Naive thymus-derived CD4-positive, alpha-beta T cell (primary cell): ENCODE measurements at regions of chr19 and their contacts with region 1.

Region 1: GRCh38 chr19:56538254-56538760 is 441 bp upstream of the ZFP28 start:
- DNase-seq: peak; percentile 84 to 94 (median 89)
- ATAC-seq: peak; percentile 94
- H3K4me3 ChIP-seq: peak overlapping the region; percentile 87
- H3K4me3 Mint-ChIP-seq: peak overlapping the region; percentile 88 to 95 (median 93)
- H3K27ac ChIP-seq: peak overlapping the region; percentile 83
- H3K27ac Mint-ChIP-seq: peak overlapping the region; percentile 90 to 97 (median 94)
- H3K4me1 ChIP-seq: peaks cover 5% of the 10 kb centered on the region in 2 donors
- H3K4me1 Mint-ChIP-seq: peaks cover 13 to 27% (median 21%) of the 10 kb centered on the region in 7 donors
- H3K27me3 ChIP-seq: no peaks in the 10 kb centered on the region
- H3K27me3 Mint-ChIP-seq: peaks cover 0 to 4% (median 0%) of the 10 kb centered on the region in 5 donors

Region 2: DNA sequence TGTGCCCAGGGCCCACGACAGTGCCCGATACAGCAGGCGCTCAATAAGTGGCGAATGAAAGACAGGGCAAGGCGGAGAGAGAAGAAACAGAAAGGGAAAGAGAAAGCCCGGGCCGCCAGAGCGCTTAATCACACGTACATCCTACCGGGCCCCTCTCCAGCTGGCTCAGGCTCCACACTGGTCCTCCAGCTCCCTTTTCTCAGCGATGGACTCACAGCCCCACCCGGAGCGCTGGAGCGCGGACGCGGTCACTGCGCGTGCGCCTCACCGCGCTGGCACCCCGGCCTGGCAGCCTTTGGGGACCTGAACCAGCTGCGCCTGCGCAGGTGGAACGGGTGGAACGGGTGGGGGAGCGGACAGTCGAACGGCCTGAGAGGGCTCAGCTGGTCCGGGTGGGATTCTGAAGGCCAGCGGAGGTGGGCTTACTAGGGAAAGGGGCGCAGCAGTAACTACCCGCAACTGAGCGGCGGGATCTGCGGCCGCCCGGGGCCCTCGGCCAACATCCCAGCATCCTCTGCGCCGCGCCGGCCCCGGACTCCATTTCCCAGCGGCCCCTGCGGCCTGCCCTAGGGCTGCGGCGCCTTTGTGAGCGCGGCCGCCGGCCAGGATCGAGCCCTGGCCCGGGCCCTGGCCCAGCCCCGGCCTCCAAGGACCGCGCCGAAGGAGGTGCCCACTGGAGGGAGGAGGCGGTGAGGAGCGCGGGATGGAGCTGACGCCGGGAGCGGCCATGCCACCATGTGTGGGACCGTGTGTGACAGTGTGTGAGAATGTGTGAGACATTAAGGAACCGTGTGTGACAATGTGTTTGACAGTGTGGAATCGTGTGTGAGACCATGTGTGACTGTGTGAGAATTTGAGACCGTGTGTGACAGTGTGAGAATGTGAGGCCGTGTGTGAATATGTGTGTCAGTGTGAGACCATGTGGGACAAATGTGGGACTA is 134.3 kb before region 1 on chr19 and contains the start of gene ZNF583:
- CTCF ChIA-PET with region 1: no interaction called
- POLR2A ChIA-PET with region 1: no interaction called
- intact Hi-C with region 1: loop called (anchors 1 kb)
- DNase-seq: peak; percentile 82 to 93 (median 90)
- ATAC-seq: peak; percentile 93
- H3K4me3 ChIP-seq: peak within 1 kb of the TSS; percentile 86
- H3K4me3 Mint-ChIP-seq: peak within 1 kb of the TSS; percentile 87 to 98 (median 94)
- H3K27ac ChIP-seq: peak within 1 kb of the TSS; percentile 96
- H3K27ac Mint-ChIP-seq: peak within 1 kb of the TSS; percentile 80 to 98 (median 95)
- H3K4me1 ChIP-seq: peaks cover 8 to 16% of the 10 kb centered on the region in 2 donors
- H3K4me1 Mint-ChIP-seq: peaks cover 19 to 37% (median 30%) of the 10 kb centered on the region in 7 donors
- H3K27me3 ChIP-seq: no peaks in the 10 kb centered on the region
- H3K27me3 Mint-ChIP-seq: no peaks in the 10 kb centered on the region
- total RNA-seq, gene ZNF583: 2.4 to 14.3 (median 3.1) TPM

Region 3: DNA sequence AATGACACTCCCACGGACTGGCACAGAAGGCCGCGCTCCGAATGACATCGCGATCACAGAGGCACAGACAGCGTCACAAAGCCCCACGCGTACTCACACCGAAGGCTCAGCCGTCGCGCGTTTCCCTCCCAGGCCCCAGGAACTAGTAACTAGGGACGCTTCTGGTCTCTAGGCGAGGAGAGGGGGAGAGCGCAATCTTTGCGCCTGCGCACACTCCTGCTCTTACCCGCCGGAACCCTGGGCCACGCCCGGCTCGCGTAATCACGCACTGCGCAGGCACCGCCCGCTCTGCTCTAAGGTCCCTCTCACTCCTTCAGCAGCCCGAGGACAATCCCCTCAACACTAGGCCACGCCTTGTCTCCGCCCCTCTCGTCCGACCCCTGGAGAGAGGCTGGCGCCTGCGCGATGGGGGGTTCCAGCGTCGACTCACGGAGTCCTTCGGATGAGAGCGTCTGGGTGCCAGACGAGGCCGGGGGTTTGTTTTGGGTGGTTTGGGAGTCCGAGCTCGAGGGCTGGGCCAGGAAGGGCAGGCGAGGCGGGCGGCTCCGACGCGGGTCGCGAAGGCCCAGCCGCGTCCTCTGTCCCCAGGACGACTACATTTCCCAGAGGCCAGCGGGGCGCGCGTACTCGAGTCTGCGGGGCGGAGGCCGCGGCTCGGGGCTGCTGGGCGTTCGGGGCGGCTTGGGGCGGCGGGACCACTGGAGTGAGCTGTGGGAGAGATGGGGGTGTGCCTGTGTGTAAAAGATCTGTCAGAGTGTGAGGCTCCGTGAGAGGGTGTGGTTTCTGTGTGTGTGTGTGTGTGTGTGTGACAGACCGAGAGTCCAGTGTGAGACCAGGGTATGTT is 30.6 kb before region 1 on chr19 and contains the start of gene ZNF471:
- CTCF ChIA-PET with region 1: no interaction called
- POLR2A ChIA-PET with region 1: no interaction called
- intact Hi-C with region 1: loop called in 1 of 2 experiments (anchors 1 kb)
- DNase-seq: peak; percentile 44 to 93 (median 82)
- ATAC-seq: peak; percentile 99
- H3K4me3 ChIP-seq: peak within 1 kb of the TSS; percentile 42
- H3K4me3 Mint-ChIP-seq: no peak within 1 kb of the TSS
- H3K27ac ChIP-seq: peak within 1 kb of the TSS; percentile 85
- H3K27ac Mint-ChIP-seq: peak within 1 kb of the TSS in 3 of 9 donors; percentile 3 to 81 (median 10)
- H3K4me1 ChIP-seq: peaks cover 0 to 5% of the 10 kb centered on the region in 2 donors
- H3K4me1 Mint-ChIP-seq: peaks cover 0 to 10% (median 6%) of the 10 kb centered on the region in 7 donors
- H3K27me3 ChIP-seq: no peaks in the 10 kb centered on the region
- H3K27me3 Mint-ChIP-seq: peaks cover 0 to 15% (median 0%) of the 10 kb centered on the region in 5 donors
- total RNA-seq, gene ZNF471: 0.22 to 2.3 (median 1.6) TPM

Region 4: DNA sequence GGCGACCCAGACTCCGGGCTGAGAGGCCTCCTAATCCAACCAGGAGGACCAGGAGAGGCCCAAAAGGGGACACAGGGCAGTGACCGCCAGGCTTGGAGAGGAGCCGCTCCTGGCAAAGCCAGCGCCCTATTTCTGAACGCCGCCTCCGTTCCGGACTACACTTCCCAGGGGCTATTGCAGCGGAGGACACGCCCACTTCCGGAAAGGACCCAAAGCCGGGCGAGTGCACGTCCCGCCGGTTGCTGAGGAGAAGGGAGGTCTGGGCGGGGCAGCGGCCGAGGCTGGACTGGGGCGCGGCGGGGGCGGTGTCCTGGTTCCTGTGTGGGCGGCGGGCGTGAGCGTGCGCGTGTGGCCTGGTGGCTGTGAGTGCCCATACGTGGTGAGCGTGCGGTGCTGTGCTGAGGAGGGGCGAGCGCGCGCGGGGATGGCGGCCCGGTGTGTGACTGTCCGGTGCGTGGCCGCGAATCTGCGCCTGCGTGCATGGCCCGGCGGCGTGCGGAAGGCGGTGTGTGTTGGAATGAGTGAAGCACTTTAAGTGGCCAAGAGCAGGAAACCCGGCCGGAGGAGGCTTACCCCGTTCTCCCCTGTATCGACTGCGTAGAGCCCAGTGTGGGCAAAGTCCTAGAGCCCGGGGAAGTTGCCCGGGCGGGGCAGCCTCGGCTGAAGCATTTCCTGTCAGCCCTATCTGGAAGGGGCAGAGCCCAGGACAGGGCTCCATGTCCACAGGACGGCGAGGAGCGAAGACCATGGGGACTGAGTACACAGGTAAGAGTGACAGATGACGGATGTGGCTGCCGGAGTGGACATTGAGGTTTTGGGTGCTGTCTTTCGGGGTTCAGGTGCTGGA is 29.2 kb after region 1 on chr19 and contains the start of gene ZNF470:
- CTCF ChIA-PET with region 1: no interaction called
- POLR2A ChIA-PET with region 1: interaction called, 4 read pairs
- intact Hi-C with region 1: loop called (anchors 1 kb)
- DNase-seq: peak; percentile 73 to 86 (median 80)
- ATAC-seq: peak; percentile 98
- H3K4me3 ChIP-seq: peak within 1 kb of the TSS; percentile 86
- H3K4me3 Mint-ChIP-seq: peak within 1 kb of the TSS; percentile 89 to 98 (median 96)
- H3K27ac ChIP-seq: peak within 1 kb of the TSS; percentile 77
- H3K27ac Mint-ChIP-seq: peak within 1 kb of the TSS; percentile 59 to 91 (median 84)
- H3K4me1 ChIP-seq: peaks cover 0 to 9% of the 10 kb centered on the region in 2 donors
- H3K4me1 Mint-ChIP-seq: peaks cover 10 to 25% (median 13%) of the 10 kb centered on the region in 7 donors
- H3K27me3 ChIP-seq: no peaks in the 10 kb centered on the region
- H3K27me3 Mint-ChIP-seq: no peaks in the 10 kb centered on the region
- total RNA-seq, gene ZNF470: 0.98 to 5.9 (median 2.4) TPM

Region 5: GRCh38 chr19:56594783-56595547 is 56.7 kb after region 1 on chr19 and contains the start of gene ZNF71:
- CTCF ChIA-PET with region 1: no interaction called
- POLR2A ChIA-PET with region 1: no interaction called
- intact Hi-C with region 1: loop called (anchors 1 to 2 kb)
- DNase-seq: peak; percentile 75 to 89 (median 81)
- ATAC-seq: peak; percentile 96
- H3K4me3 ChIP-seq: peak within 1 kb of the TSS; percentile 57
- H3K4me3 Mint-ChIP-seq: peak within 1 kb of the TSS; percentile 83 to 99 (median 90)
- H3K27ac ChIP-seq: peak within 1 kb of the TSS; percentile 71
- H3K27ac Mint-ChIP-seq: peak within 1 kb of the TSS; percentile 72 to 94 (median 86)
- H3K4me1 ChIP-seq: peaks cover 0 to 3% of the 10 kb centered on the region in 2 donors
- H3K4me1 Mint-ChIP-seq: peaks cover 19 to 30% (median 21%) of the 10 kb centered on the region in 7 donors
- H3K27me3 ChIP-seq: no peaks in the 10 kb centered on the region
- H3K27me3 Mint-ChIP-seq: no peaks in the 10 kb centered on the region
- total RNA-seq, gene ZNF71: 4.5 to 7.7 (median 6.6) TPM

Region 6: DNA sequence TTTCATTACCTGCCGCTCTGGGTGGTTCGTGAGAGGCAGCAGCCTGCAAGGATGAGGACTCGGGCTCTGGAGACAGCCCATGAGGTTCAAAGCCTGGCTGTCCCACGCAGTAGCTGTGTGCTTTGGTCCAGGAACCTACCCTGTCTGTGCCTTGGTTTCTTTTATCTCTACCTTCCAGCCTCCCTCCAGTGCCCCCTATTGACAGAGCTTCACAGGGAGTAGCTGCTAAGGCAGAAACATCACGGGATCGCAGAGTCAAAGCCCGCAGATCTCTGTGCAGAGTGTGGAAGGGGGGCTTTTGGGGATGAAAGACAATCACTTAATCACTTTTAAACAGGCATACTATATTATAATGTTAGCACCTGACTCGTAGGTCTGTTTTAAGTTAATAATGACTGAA is 73.0 kb after region 1 on chr19:
- CTCF ChIA-PET with region 1: no interaction called
- POLR2A ChIA-PET with region 1: no interaction called
- intact Hi-C with region 1: no loop called
- DNase-seq: no peak
- ATAC-seq: no peak
- H3K4me3 ChIP-seq: no peak overlapping the region
- H3K4me3 Mint-ChIP-seq: no peak overlapping the region
- H3K27ac ChIP-seq: no peak overlapping the region
- H3K27ac Mint-ChIP-seq: no peak overlapping the region
- H3K4me1 ChIP-seq: no peaks in the 10 kb centered on the region
- H3K4me1 Mint-ChIP-seq: peaks cover 0 to 6% (median 0%) of the 10 kb centered on the region in 7 donors
- H3K27me3 ChIP-seq: no peaks in the 10 kb centered on the region
- H3K27me3 Mint-ChIP-seq: no peaks in the 10 kb centered on the region

Region 7: GRCh38 chr19:56671613-56671994 is 133.3 kb after region 1 on chr19 and contains the start of gene ZNF835:
- CTCF ChIA-PET with region 1: no interaction called
- POLR2A ChIA-PET with region 1: no interaction called
- intact Hi-C with region 1: loop called in 1 of 2 experiments (anchors 1 kb)
- DNase-seq: peak; percentile 52 to 83 (median 75)
- ATAC-seq: peak; percentile 95
- H3K4me3 ChIP-seq: peak within 1 kb of the TSS; percentile 53
- H3K4me3 Mint-ChIP-seq: peak within 1 kb of the TSS; percentile 69 to 95 (median 89)
- H3K27ac ChIP-seq: peak within 1 kb of the TSS; percentile 67
- H3K27ac Mint-ChIP-seq: peak within 1 kb of the TSS in 6 of 9 donors; percentile 40 to 95 (median 80)
- H3K4me1 ChIP-seq: peaks cover 0 to 7% of the 10 kb centered on the region in 2 donors
- H3K4me1 Mint-ChIP-seq: peaks cover 0 to 17% (median 11%) of the 10 kb centered on the region in 7 donors
- H3K27me3 ChIP-seq: no peaks in the 10 kb centered on the region
- H3K27me3 Mint-ChIP-seq: no peaks in the 10 kb centered on the region
- total RNA-seq, gene ZNF835: 0.73 to 5.7 (median 1.4) TPM